Right ventricle myocardium inferior (tissue), 1 donor: ENCODE measurements at regions of chr14 and their contacts with region 1.

Region 1: GRCh38 chr14:102917469-102918211 is 4.8 kb upstream of the AMN start:
- DNase-seq: no peak
- ATAC-seq: peak; percentile 51

Region 2: DNA sequence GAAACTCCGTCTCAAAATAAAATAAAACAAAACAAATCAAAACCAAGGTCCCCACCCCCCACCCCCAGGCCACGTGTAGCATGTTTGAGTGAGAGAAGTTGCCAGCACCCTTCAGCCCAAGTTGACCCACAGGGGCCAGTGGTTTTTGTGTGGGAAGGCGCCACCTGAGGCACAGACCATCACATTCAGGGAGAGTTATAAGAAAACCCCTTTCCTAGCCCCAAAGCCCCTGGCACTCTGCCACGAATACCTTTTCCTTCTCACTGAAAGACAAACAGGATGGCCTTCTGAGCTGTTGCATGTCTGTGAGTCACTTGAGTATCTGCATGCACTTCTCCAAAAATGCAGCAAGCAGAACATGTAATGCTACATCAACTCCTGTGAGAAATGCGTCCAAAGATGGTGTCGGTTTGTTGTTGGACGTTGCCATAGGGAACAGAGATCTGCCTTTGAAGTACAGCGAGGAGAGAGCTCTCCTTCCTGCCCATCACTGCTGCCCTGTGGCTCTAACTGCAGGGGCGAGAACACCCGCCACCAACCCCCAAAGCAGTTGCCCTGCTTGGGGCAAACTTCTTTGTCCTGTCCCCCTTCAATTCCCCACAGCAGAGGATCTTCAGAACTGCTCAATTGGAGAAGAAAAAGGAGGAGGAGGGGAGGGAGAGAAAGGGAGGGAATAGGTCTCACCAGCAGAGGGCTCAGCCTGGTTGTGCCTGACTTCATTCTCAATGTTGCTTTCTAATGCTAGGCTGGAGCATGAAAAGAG is 143.1 kb before region 1 on chr14:
- intact Hi-C with region 1: loop called (anchors 1 kb)
- DNase-seq: no peak
- ATAC-seq: peak; percentile 60

Region 3: GRCh38 chr14:102824832-102825231 is 92.8 kb before region 1 on chr14:
- intact Hi-C with region 1: loop called (anchors 1 kb)
- DNase-seq: peak; percentile 78
- ATAC-seq: peak; percentile 96

Region 4: DNA sequence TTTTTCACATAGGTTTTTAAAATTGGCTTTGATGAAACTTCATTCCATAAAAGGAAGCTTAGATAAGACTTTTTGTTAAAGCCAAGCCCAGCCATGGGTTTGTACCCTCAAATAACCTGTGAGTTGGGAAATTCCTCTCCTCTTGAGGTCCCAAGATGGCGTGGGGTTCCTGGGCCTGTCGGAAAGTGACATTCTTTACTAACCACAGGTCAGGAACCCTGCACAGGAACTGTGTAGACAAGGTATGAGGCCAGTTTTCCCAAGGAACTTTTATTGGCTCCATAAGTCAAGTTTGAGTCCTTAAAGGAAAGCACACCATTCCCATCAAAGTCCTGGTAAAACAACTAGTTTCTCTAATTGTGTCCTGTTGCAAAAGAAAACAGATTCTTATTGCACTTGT is 60.2 kb before region 1 on chr14:
- intact Hi-C with region 1: no loop called
- DNase-seq: no peak
- ATAC-seq: no peak

Region 5: DNA sequence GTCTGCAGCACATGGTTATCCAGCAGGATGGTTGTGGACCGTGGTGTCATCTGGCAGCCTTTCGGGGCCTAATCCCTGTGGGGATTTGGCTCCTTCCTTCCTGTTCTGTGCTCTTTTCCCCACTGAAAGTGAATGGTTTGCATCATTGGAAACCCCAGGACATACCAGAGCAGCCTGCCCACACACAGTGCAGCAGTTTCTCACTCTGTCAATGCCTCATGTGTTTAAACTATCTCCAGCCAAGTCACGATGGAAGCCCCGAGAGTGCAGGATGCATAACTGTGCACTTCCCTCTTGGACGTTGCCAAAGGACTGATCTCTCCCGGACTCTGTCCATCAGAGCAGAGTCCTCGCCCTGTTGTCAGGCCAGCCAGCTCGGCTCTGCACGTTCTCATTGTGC is 24.2 kb before region 1 on chr14:
- intact Hi-C with region 1: no loop called
- DNase-seq: peak; percentile 70
- ATAC-seq: peak; percentile 85

Region 6: GRCh38 chr14:103273145-103273744 is 355.6 kb after region 1 on chr14:
- intact Hi-C with region 1: no loop called
- DNase-seq: no peak
- ATAC-seq: peak; percentile 46